ENCODE measurements at regions of chr10 and their contacts with region 1.

Region 1: GRCh38 chr10:98041372-98042043 is 11.1 kb upstream of the CRTAC1 start:
- DNase-seq: peak; percentile 75

Region 2: GRCh38 chr10:97914837-97915211 is 126.7 kb before region 1 on chr10:
- CTCF ChIA-PET with region 1: interaction called, 45 read pairs
- POLR2A ChIA-PET with region 1: interaction called, 5 read pairs
- DNase-seq: peak; percentile 89

Region 3: DNA sequence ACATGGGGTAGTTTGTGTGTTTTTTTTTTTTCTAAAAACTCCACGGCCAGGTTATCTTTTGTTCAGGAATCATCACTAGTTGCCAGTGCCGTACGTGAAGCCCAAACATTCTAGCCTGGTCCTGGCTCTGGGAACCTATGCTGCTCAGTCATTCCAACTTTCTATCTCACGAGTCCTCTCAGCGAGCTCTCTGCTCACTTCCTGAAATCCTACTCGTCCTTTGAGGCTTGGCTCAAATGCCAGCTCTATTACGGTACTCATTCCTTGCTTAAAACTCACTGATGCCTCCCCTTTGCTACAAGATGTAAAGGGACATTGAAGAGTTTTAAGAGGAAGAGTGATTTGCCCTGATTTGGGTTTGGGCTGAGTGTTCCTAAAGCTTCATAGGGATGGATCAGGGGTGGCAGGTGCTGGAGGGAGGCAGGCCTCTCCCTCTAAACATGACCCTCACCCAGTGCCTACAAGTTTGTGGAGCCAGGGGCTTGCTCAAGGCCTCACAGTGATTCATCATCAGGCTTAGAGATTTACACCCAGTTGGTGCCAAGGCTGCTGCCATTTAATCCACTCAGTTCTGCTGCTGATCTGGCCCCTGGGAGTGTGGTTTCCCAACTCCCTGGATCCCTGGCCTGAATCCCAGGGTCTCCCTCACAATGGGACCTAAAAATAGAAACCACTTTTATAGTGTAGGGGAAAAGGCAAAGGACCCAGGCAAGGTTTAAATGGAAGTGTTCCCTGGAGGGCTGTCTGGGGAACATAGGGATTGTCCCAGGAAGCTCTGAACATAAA is 46.9 kb after region 1 on chr10:
- CTCF ChIA-PET with region 1: no interaction called
- POLR2A ChIA-PET with region 1: no interaction called
- DNase-seq: no peak